Activated T-helper 1 cell treated with anti-CD3 and anti-CD28 coated beads, Interleukin-12 subunit alpha, Interleukin-12 subunit beta, Interleukin-2, Interleukin-4 antibody, amounts not matched to agents 30 ng/mL and 10 ng/mL and 1 ng/mL, durations not matched to agents 14 hours and 24 hours and 36 hours (primary cell): ENCODE measurements at regions of chr3 and their contacts with region 1.

Region 1: GRCh38 chr3:60081381-60082095 is 1031.7 kb upstream of the CFAP20DC start:
- DNase-seq: no peak
- H3K4me3 Mint-ChIP-seq: peak overlapping the region; percentile 79
- H3K27ac Mint-ChIP-seq: peak overlapping the region; percentile 95
- H3K4me1 Mint-ChIP-seq: peaks cover 87% of the 10 kb centered on the region
- H3K27me3 Mint-ChIP-seq: no peaks in the 10 kb centered on the region

Region 2: GRCh38 chr3:59212128-59212779 is 869.3 kb before region 1 on chr3:
- intact Hi-C with region 1: loop called (anchors 2 kb)
- DNase-seq: no peak
- H3K4me3 Mint-ChIP-seq: no peak overlapping the region
- H3K27ac Mint-ChIP-seq: no peak overlapping the region
- H3K4me1 Mint-ChIP-seq: peaks cover 11% of the 10 kb centered on the region
- H3K27me3 Mint-ChIP-seq: peaks cover 14% of the 10 kb centered on the region

Region 3: GRCh38 chr3:59783468-59783988 is 298.0 kb before region 1 on chr3:
- intact Hi-C with region 1: loop called (anchors 2 kb)
- DNase-seq: peak; percentile 31
- H3K4me3 Mint-ChIP-seq: peak overlapping the region; percentile 40
- H3K27ac Mint-ChIP-seq: peak overlapping the region; percentile 91
- H3K4me1 Mint-ChIP-seq: peaks cover 41% of the 10 kb centered on the region
- H3K27me3 Mint-ChIP-seq: no peaks in the 10 kb centered on the region

Region 4: GRCh38 chr3:60010781-60011180 is 70.8 kb before region 1 on chr3:
- intact Hi-C with region 1: loop called (anchors 1 kb)
- DNase-seq: peak; percentile 73
- H3K4me3 Mint-ChIP-seq: peak overlapping the region; percentile 74
- H3K27ac Mint-ChIP-seq: peak overlapping the region; percentile 91
- H3K4me1 Mint-ChIP-seq: peaks cover 76% of the 10 kb centered on the region
- H3K27me3 Mint-ChIP-seq: peaks cover 2% of the 10 kb centered on the region

Region 5: GRCh38 chr3:60064210-60065178 is 17.0 kb before region 1 on chr3:
- intact Hi-C with region 1: loop called (anchors 1 kb)
- DNase-seq: no peak
- H3K4me3 Mint-ChIP-seq: peak overlapping the region; percentile 53
- H3K27ac Mint-ChIP-seq: peak overlapping the region; percentile 86
- H3K4me1 Mint-ChIP-seq: peaks cover 79% of the 10 kb centered on the region
- H3K27me3 Mint-ChIP-seq: no peaks in the 10 kb centered on the region

Region 6: DNA sequence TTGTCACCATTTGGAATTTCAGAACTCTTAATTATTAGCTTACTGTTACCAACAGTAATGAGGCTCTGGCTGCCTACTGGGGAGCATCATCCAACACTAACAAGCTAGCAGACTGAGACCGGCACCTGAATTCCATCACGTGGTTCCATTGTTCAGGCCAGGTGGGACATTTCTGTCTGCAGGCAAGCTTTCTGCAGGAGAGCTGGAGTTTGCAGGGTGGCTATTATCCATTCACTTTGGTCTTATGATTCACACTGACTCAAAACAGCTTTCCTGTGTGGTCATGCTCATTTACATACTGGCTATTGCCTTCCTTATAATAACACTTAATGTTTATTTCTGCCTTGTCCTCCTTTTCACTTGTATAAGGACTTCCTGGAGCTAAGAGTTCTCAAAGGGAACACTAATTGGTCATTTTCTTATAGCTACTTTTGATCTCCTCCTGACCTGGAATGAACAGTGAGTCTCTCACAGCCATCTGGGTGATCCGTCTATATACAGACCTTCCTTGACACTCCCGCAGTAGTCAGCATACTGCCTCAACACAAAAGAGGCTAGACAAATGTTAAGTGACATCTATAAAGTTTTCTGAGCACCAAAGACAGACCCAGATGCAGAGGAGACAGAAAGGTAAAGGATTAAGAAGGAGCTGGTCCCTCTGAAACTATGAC is 474.3 kb after region 1 on chr3:
- intact Hi-C with region 1: loop called (anchors 1 kb)
- DNase-seq: no peak
- H3K4me3 Mint-ChIP-seq: no peak overlapping the region
- H3K27ac Mint-ChIP-seq: peak overlapping the region; percentile 0
- H3K4me1 Mint-ChIP-seq: peaks cover 38% of the 10 kb centered on the region
- H3K27me3 Mint-ChIP-seq: peaks cover 2% of the 10 kb centered on the region

Region 7: DNA sequence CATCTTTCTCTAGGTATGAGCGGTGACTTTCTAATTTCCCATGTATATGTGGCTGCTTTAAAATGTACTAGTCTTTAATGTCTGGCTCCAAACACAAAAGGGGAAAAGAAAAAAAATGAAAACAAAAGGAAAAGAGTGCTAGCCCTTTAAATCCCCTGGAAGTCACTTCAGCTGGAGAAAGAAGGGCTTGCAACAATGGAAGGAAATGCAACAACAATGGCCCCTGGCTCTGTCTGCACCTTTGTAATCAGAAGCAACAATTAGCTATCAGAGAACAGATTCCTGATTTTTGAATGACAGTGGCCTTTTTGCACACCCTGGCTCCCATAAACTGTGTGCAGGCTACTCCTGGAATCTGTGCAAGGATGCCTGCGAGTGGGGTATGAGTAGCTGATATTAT is 578.5 kb after region 1 on chr3:
- intact Hi-C with region 1: no loop called
- DNase-seq: no peak
- H3K4me3 Mint-ChIP-seq: no peak overlapping the region
- H3K27ac Mint-ChIP-seq: no peak overlapping the region
- H3K4me1 Mint-ChIP-seq: no peaks in the 10 kb centered on the region
- H3K27me3 Mint-ChIP-seq: no peaks in the 10 kb centered on the region